CD8-positive, alpha-beta memory T cell (primary cell): ENCODE measurements at regions of chrX and their contacts with region 1.

Region 1: DNA sequence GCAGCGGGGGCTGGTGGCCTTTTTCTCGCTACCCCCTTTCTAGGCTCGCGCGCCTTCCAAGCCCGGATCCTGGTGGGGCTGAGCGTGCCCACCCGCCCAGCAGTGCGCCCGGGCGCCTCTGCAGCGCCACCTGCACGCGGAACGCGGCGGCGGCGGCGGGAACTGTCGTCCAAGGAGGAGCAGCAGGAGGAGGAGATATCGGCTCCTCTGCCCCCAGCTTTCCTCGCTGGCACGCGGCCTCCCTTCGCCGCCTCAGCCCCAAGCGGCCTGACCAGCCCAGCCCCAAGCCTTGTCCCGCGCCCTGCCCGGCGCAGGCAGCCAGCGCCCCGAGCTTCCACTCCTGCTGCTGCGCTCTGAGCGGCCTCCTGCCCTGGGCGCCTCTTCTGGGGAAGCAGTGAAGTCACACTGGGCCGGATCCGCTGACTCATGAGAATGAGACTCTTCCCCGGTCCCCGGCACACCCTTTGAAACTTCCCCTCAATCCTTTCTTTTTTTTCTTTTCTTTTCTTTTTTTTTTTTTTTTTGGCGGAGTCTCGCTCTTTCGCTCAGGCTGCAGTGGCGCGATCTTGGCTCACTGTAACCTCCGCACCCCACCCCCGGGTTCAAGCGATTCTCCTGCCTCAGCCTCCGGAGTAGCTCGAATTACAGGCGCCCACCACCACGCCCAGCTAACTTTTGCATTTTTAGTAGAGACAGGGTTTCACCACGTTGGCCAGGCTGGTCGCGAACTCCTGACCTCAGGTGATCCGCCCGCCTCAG is 10.6 kb upstream of the ELF4 start:
- DNase-seq: peak; percentile 55 to 77 (median 68)
- H3K4me3 ChIP-seq: peak overlapping the region; percentile 41
- H3K4me3 Mint-ChIP-seq: peak overlapping the region; percentile 62 to 90 (median 72)
- H3K27ac ChIP-seq: peak overlapping the region; percentile 31
- H3K27ac Mint-ChIP-seq: peak overlapping the region in 4 of 8 donors; percentile 14 to 66 (median 38)
- H3K4me1 ChIP-seq: no peaks in the 10 kb centered on the region
- H3K4me1 Mint-ChIP-seq: peaks cover 9 to 26% (median 24%) of the 10 kb centered on the region in 3 donors
- H3K27me3 ChIP-seq: no peaks in the 10 kb centered on the region
- H3K27me3 Mint-ChIP-seq: peaks cover 0 to 6% of the 10 kb centered on the region in 2 donors

Region 2: GRCh38 chrX:130086447-130087206 is 34.3 kb before region 1 on chrX:
- CTCF ChIA-PET with region 1: interaction called, 133 read pairs
- POLR2A ChIA-PET with region 1: interaction called, 12 read pairs
- DNase-seq: peak; percentile 48 to 85 (median 80)
- H3K4me3 ChIP-seq: peak overlapping the region; percentile 78
- H3K4me3 Mint-ChIP-seq: peak overlapping the region; percentile 83 to 97 (median 91)
- H3K27ac ChIP-seq: peak overlapping the region; percentile 3
- H3K27ac Mint-ChIP-seq: peak overlapping the region; percentile 80 to 98 (median 92)
- H3K4me1 ChIP-seq: peaks cover 52% of the 10 kb centered on the region
- H3K4me1 Mint-ChIP-seq: peaks cover 77 to 91% (median 81%) of the 10 kb centered on the region in 3 donors
- H3K27me3 ChIP-seq: no peaks in the 10 kb centered on the region
- H3K27me3 Mint-ChIP-seq: no peaks in the 10 kb centered on the region

Region 3: GRCh38 chrX:130110379-130111219 is 10.3 kb before region 1 on chrX and contains the start of gene ELF4:
- CTCF ChIA-PET with region 1: interaction called, 27 read pairs
- POLR2A ChIA-PET with region 1: no interaction called
- DNase-seq: peak; percentile 48 to 77 (median 55)
- H3K4me3 ChIP-seq: peak within 1 kb of the TSS; percentile 50
- H3K4me3 Mint-ChIP-seq: peak within 1 kb of the TSS; percentile 87 to 95 (median 89)
- H3K27ac ChIP-seq: peak within 1 kb of the TSS; percentile 70
- H3K27ac Mint-ChIP-seq: peak within 1 kb of the TSS; percentile 76 to 97 (median 90)
- H3K4me1 ChIP-seq: peaks cover 17% of the 10 kb centered on the region
- H3K4me1 Mint-ChIP-seq: peaks cover 31 to 47% (median 35%) of the 10 kb centered on the region in 3 donors
- H3K27me3 ChIP-seq: no peaks in the 10 kb centered on the region
- H3K27me3 Mint-ChIP-seq: peaks cover 0 to 2% of the 10 kb centered on the region in 2 donors
- total RNA-seq, gene ELF4: 23.8 to 24.7 TPM

Region 4: DNA sequence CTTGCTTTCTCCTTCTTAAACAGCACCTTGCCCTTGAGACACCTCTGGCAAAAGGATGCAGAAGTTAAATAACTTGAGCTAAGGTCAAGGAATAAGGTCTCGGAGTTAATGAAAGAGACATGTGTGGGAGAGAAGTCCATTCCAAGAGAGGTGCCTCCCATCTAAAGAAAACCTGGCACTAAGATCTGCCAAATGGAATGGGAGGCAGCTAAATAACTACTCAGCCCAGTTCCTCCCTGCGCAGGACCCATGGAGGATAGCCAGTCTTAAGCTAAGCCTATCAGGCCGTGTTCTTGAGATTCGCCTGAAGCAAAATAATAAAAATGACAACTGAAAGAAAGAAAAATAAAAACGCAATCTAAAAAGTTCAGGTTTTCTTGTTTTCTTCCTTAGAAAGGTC is 10.1 kb after region 1 on chrX:
- CTCF ChIA-PET with region 1: interaction called, 14 read pairs
- POLR2A ChIA-PET with region 1: no interaction called
- DNase-seq: no peak
- H3K4me3 ChIP-seq: no peak overlapping the region
- H3K4me3 Mint-ChIP-seq: no peak overlapping the region
- H3K27ac ChIP-seq: no peak overlapping the region
- H3K27ac Mint-ChIP-seq: peak overlapping the region in 1 of 8 donors; percentile 20
- H3K4me1 ChIP-seq: no peaks in the 10 kb centered on the region
- H3K4me1 Mint-ChIP-seq: no peaks in the 10 kb centered on the region
- H3K27me3 ChIP-seq: no peaks in the 10 kb centered on the region
- H3K27me3 Mint-ChIP-seq: peaks cover 0 to 5% of the 10 kb centered on the region in 2 donors

Region 5: DNA sequence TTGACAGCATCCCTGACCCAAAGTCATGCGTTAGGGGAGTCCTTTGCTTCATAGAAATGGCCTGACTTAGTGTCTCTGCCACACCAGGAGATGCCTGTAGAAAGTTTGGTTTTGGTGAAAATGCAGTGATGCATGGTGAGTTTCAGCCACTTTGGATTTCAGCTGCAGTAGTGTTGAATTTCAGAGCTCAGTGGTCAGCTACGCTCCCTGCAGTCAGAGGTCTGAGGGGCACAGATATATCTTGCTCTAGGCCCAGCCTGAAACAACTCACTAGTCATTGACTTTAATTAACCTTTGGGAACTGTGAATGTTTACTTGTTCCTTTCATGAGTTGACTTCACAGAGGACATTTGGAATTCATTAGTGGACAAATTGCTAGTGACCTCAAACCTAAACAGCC is 298.3 kb after region 1 on chrX:
- CTCF ChIA-PET with region 1: no interaction called
- POLR2A ChIA-PET with region 1: no interaction called
- DNase-seq: no peak
- H3K4me3 ChIP-seq: no peak overlapping the region
- H3K4me3 Mint-ChIP-seq: no peak overlapping the region
- H3K27ac ChIP-seq: no peak overlapping the region
- H3K27ac Mint-ChIP-seq: no peak overlapping the region
- H3K4me1 ChIP-seq: no peaks in the 10 kb centered on the region
- H3K4me1 Mint-ChIP-seq: peaks cover 8 to 18% (median 9%) of the 10 kb centered on the region in 3 donors
- H3K27me3 ChIP-seq: no peaks in the 10 kb centered on the region
- H3K27me3 Mint-ChIP-seq: peaks cover 0 to 7% of the 10 kb centered on the region in 2 donors